Activated naive CD8-positive, alpha-beta T cell treated with anti-CD3 and anti-CD28 coated beads, Interleukin-2, amount 10 ng/mL, durations not matched to agents 7 days and 5 days (primary cell): ENCODE measurements at regions of chr5 and their contacts with region 1.

Region 1: GRCh38 chr5:6359555-6360322 is 18.6 kb downstream of the MED10 start:
- DNase-seq: peak; percentile 53
- ATAC-seq: peak; percentile 99
- H3K4me3 Mint-ChIP-seq: peak overlapping the region; percentile 78
- H3K27ac Mint-ChIP-seq: peak overlapping the region; percentile 96
- H3K4me1 Mint-ChIP-seq: peaks cover 19% of the 10 kb centered on the region
- H3K27me3 Mint-ChIP-seq: no peaks in the 10 kb centered on the region

Region 2: GRCh38 chr5:6377905-6378765 is 18.4 kb after region 1 on chr5 and contains the start of gene MED10:
- POLR2A ChIA-PET with region 1: interaction called, 29 read pairs
- DNase-seq: peak; percentile 95
- ATAC-seq: peak; percentile 96
- H3K4me3 Mint-ChIP-seq: peak within 1 kb of the TSS; percentile 98
- H3K27ac Mint-ChIP-seq: peak within 1 kb of the TSS; percentile 97
- H3K4me1 Mint-ChIP-seq: peaks cover 31% of the 10 kb centered on the region
- H3K27me3 Mint-ChIP-seq: peaks cover 8% of the 10 kb centered on the region
- total RNA-seq, gene MED10: 50.5 to 56.7 TPM